ENCODE measurements at regions of chr3 and their contacts with region 1.

Region 1: GRCh38 chr3:13332158-13332557 is 88.0 kb downstream of the NUP210 start:
- DNase-seq: peak; percentile 87
- ATAC-seq: peak; percentile 89
- H3K4me3 ChIP-seq: no peak overlapping the region
- H3K4me3 Mint-ChIP-seq: peak overlapping the region; percentile 62
- H3K27ac ChIP-seq: peak overlapping the region; percentile 46 to 64
- H3K27ac Mint-ChIP-seq: peak overlapping the region; percentile 87
- H3K4me1 ChIP-seq: peaks cover 27 to 41% of the 10 kb centered on the region in 2 donors
- H3K4me1 Mint-ChIP-seq: peaks cover 40% of the 10 kb centered on the region
- H3K27me3 ChIP-seq: no peaks in the 10 kb centered on the region
- H3K27me3 Mint-ChIP-seq: no peaks in the 10 kb centered on the region
- CTCF ChIP-seq: no peak

Region 2: GRCh38 chr3:12716605-12717151 is 615.5 kb before region 1 on chr3:
- CTCF ChIA-PET with region 1: no interaction called
- POLR2A ChIA-PET with region 1: no interaction called
- intact Hi-C with region 1: no loop called
- DNase-seq: no peak
- ATAC-seq: no peak
- H3K4me3 ChIP-seq: no peak overlapping the region
- H3K4me3 Mint-ChIP-seq: no peak overlapping the region
- H3K27ac ChIP-seq: no peak overlapping the region
- H3K27ac Mint-ChIP-seq: no peak overlapping the region
- H3K4me1 ChIP-seq: peaks cover 3 to 11% of the 10 kb centered on the region in 2 donors
- H3K4me1 Mint-ChIP-seq: peaks cover 7% of the 10 kb centered on the region
- H3K27me3 ChIP-seq: peaks cover 0 to 6% (median 2%) of the 10 kb centered on the region in 4 experiments
- H3K27me3 Mint-ChIP-seq: peaks cover 9% of the 10 kb centered on the region
- CTCF ChIP-seq: no peak

Region 3: GRCh38 chr3:13479581-13480339 is 147.6 kb after region 1 on chr3 and contains the start of gene HDAC11:
- CTCF ChIA-PET with region 1: no interaction called
- POLR2A ChIA-PET with region 1: no interaction called
- intact Hi-C with region 1: loop called (anchors 1 kb)
- DNase-seq: peak; percentile 97
- ATAC-seq: peak; percentile 97
- H3K4me3 ChIP-seq: peak within 1 kb of the TSS; percentile 65 to 90 (median 80)
- H3K4me3 Mint-ChIP-seq: peak within 1 kb of the TSS; percentile 92
- H3K27ac ChIP-seq: peak within 1 kb of the TSS; percentile 61 to 86
- H3K27ac Mint-ChIP-seq: peak within 1 kb of the TSS; percentile 84
- H3K4me1 ChIP-seq: peaks cover 0 to 16% of the 10 kb centered on the region in 2 donors
- H3K4me1 Mint-ChIP-seq: peaks cover 7% of the 10 kb centered on the region
- H3K27me3 ChIP-seq: no peaks in the 10 kb centered on the region
- H3K27me3 Mint-ChIP-seq: peaks cover 3% of the 10 kb centered on the region
- CTCF ChIP-seq: no peak
- total RNA-seq, gene HDAC11: 5.5 and 6.1 TPM in 2 replicates

Measured in B cell (primary cell).